Activated CD4-positive, alpha-beta T cell treated with anti-CD3 and anti-CD28 coated beads for 36 hours (primary cell): ENCODE measurements at regions of chr6 and their contacts with region 1.

Region 1: GRCh38 chr6:106085984-106086813 is at the start of gene PRDM1:
- DNase-seq: peak; percentile 83
- ATAC-seq: peak; percentile 66
- H3K4me3 Mint-ChIP-seq: peak within 1 kb of the TSS; percentile 76
- H3K27ac Mint-ChIP-seq: peak within 1 kb of the TSS; percentile 84
- H3K4me1 Mint-ChIP-seq: peaks cover 71% of the 10 kb centered on the region
- H3K27me3 Mint-ChIP-seq: peaks cover 49% of the 10 kb centered on the region
- total RNA-seq, gene PRDM1: 20.1 to 35.6 TPM

Region 2: DNA sequence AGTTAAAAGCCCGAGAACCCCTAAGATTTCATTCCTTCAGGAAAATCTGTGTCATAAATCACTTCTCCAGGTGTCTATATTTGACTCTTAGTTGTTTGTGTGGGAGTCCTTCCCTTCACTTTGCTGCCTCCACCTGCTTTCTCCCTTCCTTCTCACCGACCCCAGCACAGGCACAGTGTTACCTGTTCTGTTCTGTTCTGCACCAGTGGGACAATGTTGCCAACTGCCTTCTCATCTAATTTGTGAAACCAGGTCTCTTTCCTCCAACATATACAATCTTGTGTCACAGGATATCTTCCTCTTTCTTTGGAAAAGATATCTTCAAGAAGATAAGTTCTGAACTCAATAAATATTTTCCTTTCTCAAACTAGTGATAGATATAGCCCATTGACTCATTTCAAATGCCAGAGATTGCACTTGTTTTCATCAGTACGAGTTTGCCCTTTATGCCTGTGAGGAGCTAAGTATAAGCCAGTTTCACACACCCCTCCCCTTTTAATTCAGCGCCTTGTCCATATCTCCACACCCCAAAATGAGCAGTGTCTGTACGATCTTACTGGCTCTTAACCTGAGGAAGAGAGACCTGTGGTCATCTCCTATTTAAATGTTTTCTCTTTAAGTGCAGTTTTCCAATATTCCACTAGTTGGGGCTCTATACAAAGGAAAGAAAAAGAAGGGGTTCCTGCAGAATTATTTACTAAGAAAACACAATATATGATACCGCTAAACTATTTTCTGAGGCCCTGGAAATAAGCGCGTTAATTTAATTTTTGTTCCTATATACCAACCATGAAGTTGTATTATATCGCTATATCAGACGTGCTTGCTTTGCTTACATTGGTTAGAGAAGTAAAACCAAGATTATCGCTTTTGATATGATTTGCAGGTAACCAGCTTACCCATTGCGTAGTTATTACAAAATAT is 601.7 kb before region 1 on chr6:
- CTCF ChIA-PET with region 1: no interaction called
- POLR2A ChIA-PET with region 1: no interaction called
- intact Hi-C with region 1: loop called (anchors 2 to 10 kb)
- DNase-seq: no peak
- ATAC-seq: peak; percentile 59
- H3K4me3 Mint-ChIP-seq: no peak overlapping the region
- H3K27ac Mint-ChIP-seq: peak overlapping the region; percentile 16
- H3K4me1 Mint-ChIP-seq: peaks cover 18% of the 10 kb centered on the region
- H3K27me3 Mint-ChIP-seq: peaks cover 11% of the 10 kb centered on the region

Region 3: GRCh38 chr6:105733565-105734162 is 352.5 kb before region 1 on chr6:
- CTCF ChIA-PET with region 1: no interaction called
- POLR2A ChIA-PET with region 1: no interaction called
- intact Hi-C with region 1: loop called (anchors 5 kb)
- DNase-seq: no peak
- ATAC-seq: no peak
- H3K4me3 Mint-ChIP-seq: no peak overlapping the region
- H3K27ac Mint-ChIP-seq: no peak overlapping the region
- H3K4me1 Mint-ChIP-seq: no peaks in the 10 kb centered on the region
- H3K27me3 Mint-ChIP-seq: peaks cover 2% of the 10 kb centered on the region

Region 4: GRCh38 chr6:105793130-105793529 is 293.1 kb before region 1 on chr6:
- CTCF ChIA-PET with region 1: no interaction called
- POLR2A ChIA-PET with region 1: no interaction called
- intact Hi-C with region 1: loop called in 1 of 2 experiments (anchors 10 kb)
- DNase-seq: no peak
- ATAC-seq: peak; percentile 37
- H3K4me3 Mint-ChIP-seq: no peak overlapping the region
- H3K27ac Mint-ChIP-seq: no peak overlapping the region
- H3K4me1 Mint-ChIP-seq: peaks cover 47% of the 10 kb centered on the region
- H3K27me3 Mint-ChIP-seq: peaks cover 2% of the 10 kb centered on the region

Region 5: DNA sequence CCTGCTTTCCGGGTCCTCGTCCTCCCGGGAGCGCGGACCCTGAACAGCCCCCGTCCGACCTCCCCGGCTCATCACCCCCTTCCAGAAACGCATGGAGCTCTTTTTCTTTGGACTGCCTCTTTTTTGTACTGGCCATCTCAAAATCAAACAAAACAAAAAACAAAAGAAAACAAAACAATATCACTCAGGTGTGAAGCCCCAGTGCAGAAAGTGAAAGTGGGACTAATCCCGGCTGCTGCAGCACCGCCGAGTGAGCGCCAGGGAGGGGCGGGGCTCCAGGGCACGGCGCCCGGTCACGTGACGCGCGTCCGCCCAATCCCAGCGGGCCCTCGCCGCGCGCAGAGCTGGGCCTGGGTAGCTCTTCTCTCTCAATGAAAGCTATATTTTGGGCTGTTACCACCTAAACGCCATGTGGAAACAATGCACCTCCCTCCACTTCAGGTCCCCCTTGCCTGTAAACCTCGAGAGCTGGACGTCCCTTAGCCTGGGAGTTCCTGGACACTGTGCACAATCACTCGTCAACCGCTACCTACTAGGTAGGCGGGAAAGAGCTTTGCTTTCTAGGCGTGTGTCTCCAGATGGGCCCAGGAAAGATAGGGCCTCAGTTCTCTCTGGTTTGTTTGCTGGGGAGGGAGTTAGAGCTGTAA is 93.8 kb before region 1 on chr6:
- CTCF ChIA-PET with region 1: interaction called, 10 read pairs
- POLR2A ChIA-PET with region 1: no interaction called
- intact Hi-C with region 1: loop called (anchors 2 to 5 kb)
- DNase-seq: peak; percentile 94
- ATAC-seq: peak; percentile 93
- H3K4me3 Mint-ChIP-seq: peak overlapping the region; percentile 88
- H3K27ac Mint-ChIP-seq: peak overlapping the region; percentile 91
- H3K4me1 Mint-ChIP-seq: peaks cover 32% of the 10 kb centered on the region
- H3K27me3 Mint-ChIP-seq: peaks cover 61% of the 10 kb centered on the region

Region 6: GRCh38 chr6:106103728-106104109 is 17.5 kb after region 1 on chr6:
- CTCF ChIA-PET with region 1: interaction called, 12 read pairs
- POLR2A ChIA-PET with region 1: interaction called, 17 read pairs
- intact Hi-C with region 1: loop called in 1 of 2 experiments (anchors 2 kb)
- DNase-seq: peak; percentile 65
- ATAC-seq: peak; percentile 47
- H3K4me3 Mint-ChIP-seq: peak overlapping the region; percentile 82
- H3K27ac Mint-ChIP-seq: peak overlapping the region; percentile 62
- H3K4me1 Mint-ChIP-seq: peaks cover 77% of the 10 kb centered on the region
- H3K27me3 Mint-ChIP-seq: peaks cover 16% of the 10 kb centered on the region

Region 7: DNA sequence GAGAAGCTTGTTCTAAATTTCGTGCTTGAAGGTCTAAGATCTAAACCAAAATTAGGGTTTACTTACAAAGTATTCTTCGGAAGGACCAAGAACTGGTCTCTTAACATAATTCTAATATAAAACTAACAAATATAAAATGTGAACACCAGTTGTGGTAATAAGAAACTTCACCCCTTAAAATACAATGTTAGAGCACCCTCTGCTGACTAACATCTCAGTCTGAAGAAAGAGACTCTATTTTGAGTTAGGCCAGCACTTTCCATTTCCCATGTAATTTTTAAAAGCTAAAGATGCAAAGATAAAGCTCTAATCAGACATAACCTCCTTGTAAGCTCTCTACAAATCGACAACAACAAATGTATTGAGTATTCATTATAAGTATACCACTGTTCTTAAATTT is 214.7 kb after region 1 on chr6:
- CTCF ChIA-PET with region 1: interaction called, 5 read pairs
- POLR2A ChIA-PET with region 1: no interaction called
- intact Hi-C with region 1: loop called in 1 of 2 experiments (anchors 5 kb)
- DNase-seq: no peak
- ATAC-seq: no peak
- H3K4me3 Mint-ChIP-seq: no peak overlapping the region
- H3K27ac Mint-ChIP-seq: no peak overlapping the region
- H3K4me1 Mint-ChIP-seq: peaks cover 7% of the 10 kb centered on the region
- H3K27me3 Mint-ChIP-seq: no peaks in the 10 kb centered on the region